Heart left ventricle (tissue), 16 donors: ENCODE measurements at regions of chrX and their contacts with region 1.

Region 1: GRCh38 chrX:10083809-10084208 is 73.0 kb upstream of the CLCN4 start:
- DNase-seq: no peak
- ATAC-seq: peak in 1 of 4 donors; percentile 22
- H3K4me3 ChIP-seq: peak overlapping the region in 2 of 12 donors; percentile 28 to 39
- H3K27ac ChIP-seq: peak overlapping the region; percentile 24 to 89 (median 78)
- H3K4me1 ChIP-seq: peaks cover 0 to 60% (median 29%) of the 10 kb centered on the region in 12 donors
- H3K27me3 ChIP-seq: no peaks in the 10 kb centered on the region
- CTCF ChIP-seq: no peak
- POLR2A ChIP-seq: no peak

Region 2: GRCh38 chrX:10014462-10015356 is 69.1 kb before region 1 on chrX:
- intact Hi-C with region 1: loop called in 2 of 10 experiments (anchors 2 kb)
- DNase-seq: peak; percentile 89 to 95 (median 92)
- ATAC-seq: peak; percentile 73 to 95 (median 92)
- H3K4me3 ChIP-seq: peak overlapping the region; percentile 41 to 80 (median 64)
- H3K27ac ChIP-seq: peak overlapping the region; percentile 82 to 96 (median 89)
- H3K4me1 ChIP-seq: peaks cover 0 to 38% (median 21%) of the 10 kb centered on the region in 12 donors
- H3K27me3 ChIP-seq: peaks cover 0 to 34% (median 0%) of the 10 kb centered on the region in 9 donors
- CTCF ChIP-seq: no peak
- POLR2A ChIP-seq: peak in 1 of 2 donors; percentile 51

Region 3: DNA sequence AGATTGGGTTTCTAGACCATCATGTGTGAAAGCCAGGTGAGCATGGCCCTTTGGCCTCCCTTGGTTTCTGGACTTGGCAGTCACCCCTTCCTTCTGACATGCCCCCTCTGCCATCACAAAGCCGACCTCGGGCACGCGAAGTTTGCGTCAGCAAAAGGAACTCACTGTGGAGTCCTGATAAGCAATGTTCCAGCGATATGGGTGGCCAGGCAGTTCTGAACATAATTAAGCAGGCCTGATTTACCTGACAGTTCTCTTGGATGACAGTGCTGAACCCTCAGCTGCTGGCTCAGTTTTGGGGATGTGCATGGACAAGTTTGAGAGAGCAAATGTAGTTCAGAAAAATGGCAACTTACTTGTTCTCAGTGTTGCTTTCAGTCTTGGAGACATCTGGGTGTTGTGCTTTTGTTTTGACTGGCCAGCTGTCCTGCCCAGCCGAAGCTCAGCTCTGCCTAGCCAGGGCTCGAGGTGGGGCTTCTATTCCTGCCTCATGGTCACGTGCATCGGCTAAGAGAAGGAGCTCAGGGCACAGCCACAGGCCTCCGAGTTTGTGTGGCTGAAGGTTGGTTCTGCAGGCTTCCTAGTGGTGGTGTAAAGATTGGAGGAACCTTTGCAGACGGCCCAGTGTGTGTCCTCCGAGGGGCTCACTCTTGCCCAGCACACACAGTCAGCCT is 38.3 kb before region 1 on chrX:
- intact Hi-C with region 1: loop called in 1 of 10 experiments (anchors 5 kb)
- DNase-seq: peak; percentile 46 to 74 (median 68)
- ATAC-seq: peak; percentile 75 to 86 (median 83)
- H3K4me3 ChIP-seq: no peak overlapping the region
- H3K27ac ChIP-seq: peak overlapping the region in 11 of 12 donors; percentile 46 to 83 (median 75)
- H3K4me1 ChIP-seq: peaks cover 0 to 69% (median 47%) of the 10 kb centered on the region in 12 donors
- H3K27me3 ChIP-seq: no peaks in the 10 kb centered on the region
- CTCF ChIP-seq: no peak
- POLR2A ChIP-seq: no peak

Region 4: GRCh38 chrX:10111364-10112148 is 27.7 kb after region 1 on chrX:
- intact Hi-C with region 1: loop called in 1 of 10 experiments (anchors 2 kb)
- DNase-seq: peak in 1 of 5 donors; percentile 66
- ATAC-seq: peak; percentile 55 to 70 (median 61)
- H3K4me3 ChIP-seq: no peak overlapping the region
- H3K27ac ChIP-seq: peak overlapping the region in 8 of 12 donors; percentile 16 to 57 (median 40)
- H3K4me1 ChIP-seq: peaks cover 0 to 65% (median 30%) of the 10 kb centered on the region in 12 donors
- H3K27me3 ChIP-seq: no peaks in the 10 kb centered on the region
- CTCF ChIP-seq: no peak
- POLR2A ChIP-seq: no peak